ENCODE measurements at regions of chr1 and their contacts with region 1.

Region 1: GRCh38 chr1:64147759-64148158 is 55.7 kb upstream of the UBE2U start:
- DNase-seq: no peak
- H3K4me3 ChIP-seq: no peak overlapping the region
- H3K27ac ChIP-seq: no peak overlapping the region
- H3K4me1 ChIP-seq: no peaks in the 10 kb centered on the region
- H3K27me3 ChIP-seq: no peaks in the 10 kb centered on the region
- CTCF ChIP-seq: no peak
- EP300 ChIP-seq: no peak
- POLR2A ChIP-seq: no peak

Region 2: DNA sequence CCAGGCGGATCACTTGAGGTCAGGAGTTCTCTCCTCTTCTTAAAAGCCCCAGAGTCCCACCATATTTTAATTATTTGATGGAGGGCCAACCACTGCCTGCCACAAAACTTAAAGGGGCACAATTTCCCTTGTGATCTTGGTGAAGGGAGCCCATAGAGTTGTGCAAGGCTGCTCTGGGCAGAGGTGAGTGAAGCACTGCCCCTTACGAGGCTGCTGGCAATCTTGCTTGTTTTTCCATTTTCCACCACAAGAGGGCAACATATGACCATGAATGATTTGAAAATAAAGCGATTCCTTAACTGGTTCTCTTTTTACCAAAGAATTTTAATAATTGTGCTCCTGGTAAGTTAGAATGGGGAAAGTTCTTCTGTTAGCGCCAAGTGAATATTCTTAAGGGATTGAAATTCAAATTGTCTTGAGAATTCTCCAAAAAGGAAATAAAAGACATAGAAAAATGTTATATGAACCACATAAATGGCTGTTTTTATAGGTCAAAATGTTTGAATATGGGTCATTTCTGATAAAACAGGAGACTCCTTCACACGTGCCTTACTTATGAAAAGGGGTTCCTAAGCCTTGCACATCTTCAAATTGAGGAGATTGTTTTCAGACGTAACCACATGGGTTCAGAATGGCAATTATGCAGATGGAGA is 531.9 kb before region 1 on chr1:
- in situ Hi-C with region 1: loop called in 1 of 4 experiments (anchors 10 kb)
- intact Hi-C with region 1: no loop called
- DNase-seq: peak; percentile 52
- H3K4me3 ChIP-seq: no peak overlapping the region
- H3K27ac ChIP-seq: no peak overlapping the region
- H3K4me1 ChIP-seq: peaks cover 0 to 6% (median 2%) of the 10 kb centered on the region in 4 donors
- H3K27me3 ChIP-seq: no peaks in the 10 kb centered on the region
- CTCF ChIP-seq: peak; percentile 75 to 84 (median 79)
- EP300 ChIP-seq: no peak
- POLR2A ChIP-seq: no peak

Region 3: DNA sequence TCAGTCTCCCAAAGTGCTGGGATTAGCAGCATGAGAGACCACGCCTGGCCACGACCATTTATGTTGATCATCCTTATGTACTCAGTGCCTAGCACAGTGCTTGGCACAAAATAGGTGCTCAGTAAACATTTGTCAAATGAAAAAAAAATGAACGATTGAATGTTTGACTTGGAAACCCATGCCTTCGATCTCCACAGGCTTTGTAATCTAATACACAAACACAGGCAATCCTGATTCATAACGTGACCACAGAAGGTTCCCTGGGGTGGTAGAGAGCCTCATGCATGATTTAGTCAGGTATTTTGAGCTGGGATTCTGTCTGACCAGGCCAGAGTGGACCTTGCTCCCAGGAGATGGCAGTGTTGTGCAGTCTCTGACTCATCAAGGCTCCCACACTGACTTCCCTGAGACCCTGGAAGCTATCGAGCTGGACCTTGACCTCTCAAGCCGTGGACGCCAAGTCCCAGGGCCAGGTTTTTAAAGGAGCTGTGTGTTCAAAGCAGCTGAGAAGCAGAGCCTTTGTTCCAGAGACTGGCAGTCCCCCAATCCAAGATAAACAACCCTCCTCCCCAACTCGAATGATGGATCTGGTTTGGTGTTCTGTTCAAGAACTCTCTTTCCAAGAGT is 473.4 kb before region 1 on chr1:
- in situ Hi-C with region 1: loop called in 2 of 4 experiments (anchors 25 kb)
- intact Hi-C with region 1: loop called (anchors 5 kb)
- DNase-seq: peak; percentile 81
- H3K4me3 ChIP-seq: no peak overlapping the region
- H3K27ac ChIP-seq: peak overlapping the region; percentile 9 to 45 (median 22)
- H3K4me1 ChIP-seq: peaks cover 0 to 11% (median 5%) of the 10 kb centered on the region in 4 donors
- H3K27me3 ChIP-seq: no peaks in the 10 kb centered on the region
- CTCF ChIP-seq: peak; percentile 51 to 66 (median 54)
- EP300 ChIP-seq: no peak
- POLR2A ChIP-seq: no peak